MCF 10A (cell line): ENCODE measurements at regions of chr6 and their contacts with region 1.

Region 1: GRCh38 chr6:39302669-39303424 is 11.4 kb downstream of the KCNK17 start:
- DNase-seq: peak; percentile 82
- H3K4me3 Mint-ChIP-seq: no peak overlapping the region
- H3K27ac Mint-ChIP-seq: no peak overlapping the region
- H3K4me1 Mint-ChIP-seq: no peaks in the 10 kb centered on the region
- H3K27me3 Mint-ChIP-seq: no peaks in the 10 kb centered on the region
- CTCF ChIP-seq: peak; percentile 94

Region 2: GRCh38 chr6:38588631-38589366 is 714.0 kb before region 1 on chr6:
- CTCF ChIA-PET with region 1: no interaction called
- POLR2A ChIA-PET with region 1: no interaction called
- intact Hi-C with region 1: no loop called
- DNase-seq: peak; percentile 62
- H3K4me3 Mint-ChIP-seq: no peak overlapping the region
- H3K27ac Mint-ChIP-seq: no peak overlapping the region
- H3K4me1 Mint-ChIP-seq: peaks cover 5% of the 10 kb centered on the region
- H3K27me3 Mint-ChIP-seq: no peaks in the 10 kb centered on the region
- CTCF ChIP-seq: no peak

Region 3: DNA sequence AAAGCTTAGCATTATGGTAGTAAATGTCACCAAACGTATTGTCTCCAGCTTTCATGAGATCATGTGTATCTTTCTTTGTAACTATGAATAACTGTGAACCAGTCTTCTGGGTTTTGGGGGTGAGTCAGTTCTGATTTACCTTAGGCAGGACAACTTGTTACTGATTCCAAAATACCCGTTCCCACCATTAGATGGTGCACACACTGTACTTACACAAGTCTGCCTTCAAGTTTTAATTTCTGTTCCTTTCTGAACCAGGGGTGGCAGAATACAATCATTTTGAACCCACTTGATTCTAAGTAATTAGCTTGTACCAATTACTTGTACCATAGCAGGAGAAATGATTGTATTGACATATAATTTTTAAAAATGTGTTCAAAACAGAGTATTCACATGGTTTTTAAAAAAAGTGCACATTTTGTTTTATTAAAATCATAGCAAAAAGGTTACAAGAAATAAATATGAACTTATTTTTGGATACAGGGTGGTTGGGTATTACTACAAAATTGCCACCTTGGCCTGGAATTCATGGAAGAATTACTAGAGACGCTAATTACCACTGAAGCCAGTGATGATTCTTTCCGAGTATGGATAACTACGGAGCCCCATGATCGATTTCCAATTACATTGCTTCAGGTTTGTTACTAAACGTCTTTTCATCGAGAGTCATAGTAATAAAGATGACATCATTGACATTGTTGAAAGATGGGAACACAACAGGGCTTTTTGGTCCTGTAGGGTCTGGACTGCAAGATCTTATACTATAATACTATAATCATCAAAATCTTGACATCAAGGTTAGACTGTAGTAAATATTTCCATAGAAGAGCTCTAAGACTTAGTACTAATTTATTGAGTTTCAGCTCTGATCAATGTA is 329.4 kb before region 1 on chr6:
- CTCF ChIA-PET with region 1: interaction called, 70 read pairs
- POLR2A ChIA-PET with region 1: no interaction called
- intact Hi-C with region 1: loop called (anchors 2 kb)
- DNase-seq: peak; percentile 67
- H3K4me3 Mint-ChIP-seq: no peak overlapping the region
- H3K27ac Mint-ChIP-seq: no peak overlapping the region
- H3K4me1 Mint-ChIP-seq: peaks cover 5% of the 10 kb centered on the region
- H3K27me3 Mint-ChIP-seq: peaks cover 72% of the 10 kb centered on the region
- CTCF ChIP-seq: peak; percentile 76

Region 4: DNA sequence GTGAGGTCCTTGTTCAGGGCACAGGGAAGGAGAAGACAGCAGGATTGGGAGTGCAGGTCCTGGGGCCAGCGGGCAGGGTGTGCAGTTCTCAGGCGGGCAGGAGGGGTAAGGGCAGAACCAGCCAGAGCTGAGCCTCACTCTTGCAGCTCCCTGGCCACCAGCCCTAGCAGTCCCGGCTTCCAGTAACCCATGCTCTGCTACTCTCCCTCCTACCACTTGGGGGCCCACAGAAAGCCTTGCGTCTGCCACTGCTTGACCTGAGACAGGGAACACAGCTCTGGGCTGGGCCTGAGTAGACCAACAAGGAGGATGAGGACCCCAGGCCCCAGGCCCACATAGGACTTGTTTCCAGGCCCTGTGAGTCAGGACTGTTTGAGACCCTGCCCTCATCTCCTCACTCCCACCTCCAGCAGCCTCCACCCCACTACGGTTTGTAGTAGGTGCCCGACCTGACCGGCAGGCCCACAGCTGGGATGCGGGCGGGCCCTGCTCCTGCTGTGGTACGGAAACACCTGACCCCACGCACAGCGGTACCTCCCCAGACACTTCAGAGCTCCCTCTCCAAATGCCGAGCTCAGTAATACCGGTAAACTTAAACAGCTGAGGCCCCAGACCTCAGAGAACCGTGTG is 112.8 kb before region 1 on chr6:
- CTCF ChIA-PET with region 1: interaction called, 56 read pairs
- POLR2A ChIA-PET with region 1: no interaction called
- intact Hi-C with region 1: no loop called
- DNase-seq: peak; percentile 54
- H3K4me3 Mint-ChIP-seq: no peak overlapping the region
- H3K27ac Mint-ChIP-seq: peak overlapping the region; percentile 40
- H3K4me1 Mint-ChIP-seq: peaks cover 17% of the 10 kb centered on the region
- H3K27me3 Mint-ChIP-seq: no peaks in the 10 kb centered on the region
- CTCF ChIP-seq: peak; percentile 38

Region 5: DNA sequence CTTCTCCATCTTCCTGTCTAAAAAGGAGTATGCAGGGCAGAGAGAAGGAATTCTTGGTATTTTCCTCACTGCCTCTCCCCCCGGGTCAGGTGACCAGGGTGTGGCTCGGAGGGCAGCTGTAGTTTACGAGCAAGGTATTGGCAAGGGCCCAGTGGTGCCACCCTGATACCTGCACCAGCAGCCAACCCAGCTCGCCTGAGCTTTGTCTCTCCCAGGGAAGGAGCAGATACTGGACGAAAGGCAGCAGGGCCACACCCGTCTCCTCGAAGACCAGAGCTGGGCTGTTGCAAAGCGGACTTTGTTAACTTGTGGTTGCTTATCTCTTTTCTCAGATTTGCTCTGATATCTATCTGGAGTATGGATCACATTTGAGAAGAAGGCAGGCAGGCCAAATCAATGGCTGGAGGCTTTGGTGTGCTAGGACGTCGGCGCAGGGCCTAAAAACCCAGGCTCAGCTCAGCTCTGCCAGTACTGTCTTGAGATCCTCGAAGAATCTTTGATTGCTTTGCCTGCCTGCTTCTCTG is 98.9 kb before region 1 on chr6:
- CTCF ChIA-PET with region 1: interaction called, 23 read pairs
- POLR2A ChIA-PET with region 1: no interaction called
- intact Hi-C with region 1: no loop called
- DNase-seq: peak; percentile 84
- H3K4me3 Mint-ChIP-seq: no peak overlapping the region
- H3K27ac Mint-ChIP-seq: peak overlapping the region; percentile 59
- H3K4me1 Mint-ChIP-seq: peaks cover 20% of the 10 kb centered on the region
- H3K27me3 Mint-ChIP-seq: no peaks in the 10 kb centered on the region
- CTCF ChIP-seq: no peak

Region 6: GRCh38 chr6:39243809-39244208 is 59.0 kb before region 1 on chr6:
- CTCF ChIA-PET with region 1: interaction called, 14 read pairs
- POLR2A ChIA-PET with region 1: no interaction called
- intact Hi-C with region 1: no loop called
- DNase-seq: peak; percentile 47
- H3K4me3 Mint-ChIP-seq: no peak overlapping the region
- H3K27ac Mint-ChIP-seq: no peak overlapping the region
- H3K4me1 Mint-ChIP-seq: no peaks in the 10 kb centered on the region
- H3K27me3 Mint-ChIP-seq: no peaks in the 10 kb centered on the region
- CTCF ChIP-seq: no peak

Region 7: DNA sequence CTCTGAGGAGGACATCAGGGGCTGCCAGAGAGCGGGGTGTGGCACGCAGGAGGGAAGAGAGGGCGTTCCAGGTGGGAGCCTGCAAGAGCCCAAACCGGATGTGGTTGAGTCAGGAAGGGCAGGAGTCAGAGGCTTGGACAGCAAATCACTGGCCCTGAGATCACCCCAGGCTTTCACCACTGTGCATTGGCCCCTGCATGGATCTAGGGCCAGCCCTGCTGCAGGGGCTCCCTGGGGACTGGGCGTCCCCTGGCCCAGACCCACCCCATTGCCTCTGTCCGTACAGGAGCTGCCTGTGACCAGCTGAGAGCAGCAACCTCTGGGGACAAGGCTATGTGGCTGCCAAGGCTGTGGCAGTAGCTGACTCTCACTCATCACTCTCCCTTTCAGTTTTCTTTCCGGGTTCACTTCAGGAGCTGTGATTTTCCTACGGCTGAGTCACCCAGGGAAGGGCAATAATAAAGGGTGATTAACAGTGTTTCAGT is 22.6 kb before region 1 on chr6:
- CTCF ChIA-PET with region 1: interaction called, 15 read pairs
- POLR2A ChIA-PET with region 1: no interaction called
- intact Hi-C with region 1: no loop called
- DNase-seq: peak; percentile 86
- H3K4me3 Mint-ChIP-seq: no peak overlapping the region
- H3K27ac Mint-ChIP-seq: no peak overlapping the region
- H3K4me1 Mint-ChIP-seq: peaks cover 15% of the 10 kb centered on the region
- H3K27me3 Mint-ChIP-seq: no peaks in the 10 kb centered on the region
- CTCF ChIP-seq: no peak